ENCODE measurements at regions of chr11 and their contacts with region 1.

Region 1: DNA sequence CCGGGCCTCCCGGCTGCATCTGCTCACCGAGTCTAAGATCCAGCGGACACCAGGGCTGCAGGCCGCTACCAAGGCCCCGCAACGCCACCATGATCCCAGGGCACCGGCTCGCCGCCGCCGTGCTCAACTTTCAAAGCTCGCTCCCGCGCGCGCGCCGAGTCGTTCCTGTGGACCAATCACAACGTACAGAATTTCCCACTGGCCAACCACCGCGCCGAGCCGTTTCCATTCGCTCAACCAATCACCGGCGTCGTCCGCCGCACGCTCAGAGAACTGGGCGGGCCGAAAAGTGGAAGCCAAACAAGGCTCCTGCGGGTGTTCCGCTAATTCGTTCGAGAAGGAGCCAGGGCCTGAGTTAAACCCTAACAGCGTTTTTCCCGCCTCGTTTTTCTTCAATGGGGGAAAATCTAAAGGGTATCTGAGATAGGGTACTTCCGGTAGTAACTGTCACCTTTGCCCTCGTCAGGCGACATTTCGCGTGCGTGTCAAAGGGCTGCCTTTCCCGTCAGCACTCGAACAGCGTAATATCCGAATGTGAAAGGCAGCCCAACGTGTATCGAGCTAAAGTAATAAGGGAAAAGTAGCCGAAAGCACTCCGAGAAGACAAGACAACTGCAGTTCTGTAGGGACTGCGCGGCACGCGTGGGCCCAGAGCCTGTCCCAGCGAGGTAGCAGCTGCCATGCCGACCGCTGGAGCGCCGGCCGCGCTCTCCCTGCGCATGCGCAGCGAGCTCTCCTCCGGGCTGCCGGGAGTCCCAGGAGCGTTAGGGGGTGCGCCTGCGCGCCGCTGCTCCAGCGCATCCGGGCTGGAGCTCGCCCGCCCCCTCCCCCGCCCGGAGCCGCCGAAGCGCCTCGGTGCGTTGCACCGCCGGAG is at the starts of genes NCAPD3 and VPS26B:
- DNase-seq: peak; percentile 92
- ATAC-seq: peak; percentile 91
- H3K4me3 ChIP-seq: peak within 1 kb of the TSS; percentile 75 to 95 (median 92)
- H3K27ac ChIP-seq: peak within 1 kb of the TSS; percentile 93
- H3K4me1 ChIP-seq: peaks cover 43% of the 10 kb centered on the region
- H3K27me3 ChIP-seq: no peaks in the 10 kb centered on the region
- CTCF ChIP-seq: no peak; the same call in 1 of the 2 replicates
- EP300 ChIP-seq: no peak
- POLR2A ChIP-seq: peak; percentile 95 to 98
- RAD21 ChIP-seq: no peak
- total RNA-seq, gene NCAPD3: 25.6 and 33.3 TPM in 2 replicates
- total RNA-seq, gene VPS26B: 20.2 and 20.4 TPM in 2 replicates

Region 2: DNA sequence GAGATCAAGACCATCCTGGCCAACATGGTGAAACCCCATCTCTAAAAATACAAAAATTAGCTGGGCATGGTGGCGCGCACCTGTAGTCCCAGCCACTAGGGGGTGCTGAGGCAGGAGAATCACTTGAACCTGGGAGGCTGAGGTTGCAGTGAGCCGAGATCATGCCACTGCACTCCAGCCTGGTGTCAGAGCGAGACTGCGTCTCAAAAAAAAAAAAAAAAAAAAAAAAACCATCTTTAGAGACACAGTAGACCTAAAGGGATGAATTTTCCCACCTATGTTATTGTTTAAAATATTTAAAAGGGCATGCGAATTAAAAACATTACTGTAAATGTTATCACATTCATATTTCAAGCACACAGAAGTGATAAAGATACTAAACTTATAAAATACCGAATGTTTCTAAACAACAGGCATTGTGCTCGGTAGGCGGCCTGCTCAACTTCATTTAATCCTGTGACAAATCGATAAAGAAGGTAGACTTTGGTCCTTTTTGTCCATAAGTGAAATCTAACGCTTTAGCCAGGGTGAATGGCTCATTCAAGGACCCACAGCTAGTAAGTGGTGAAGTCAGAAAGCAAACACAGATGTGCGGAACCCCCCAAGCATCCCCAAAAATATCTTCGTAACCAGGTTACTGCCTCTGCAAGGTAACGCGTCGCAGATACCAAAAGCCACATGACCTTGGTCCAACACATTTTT is 16.4 kb before region 1 on chr11:
- CTCF ChIA-PET with region 1: no interaction called
- POLR2A ChIA-PET with region 1: interaction called, 17 read pairs
- in situ Hi-C with region 1: no loop called
- intact Hi-C with region 1: loop called (anchors 2 kb)
- DNase-seq: peak; percentile 9
- ATAC-seq: peak; percentile 51
- H3K4me3 ChIP-seq: no peak overlapping the region
- H3K27ac ChIP-seq: no peak overlapping the region
- H3K4me1 ChIP-seq: peaks cover under 1% of the 10 kb centered on the region; the same call in 1 of the 2 replicates
- H3K27me3 ChIP-seq: no peaks in the 10 kb centered on the region
- CTCF ChIP-seq: peak; percentile 77
- EP300 ChIP-seq: no peak
- POLR2A ChIP-seq: no peak
- RAD21 ChIP-seq: peak; percentile 43; the same call in 1 of the 2 replicates

Region 3: GRCh38 chr11:134235399-134235798 is 11.3 kb after region 1 on chr11:
- CTCF ChIA-PET with region 1: no interaction called
- POLR2A ChIA-PET with region 1: interaction called, 24 read pairs
- in situ Hi-C with region 1: no loop called
- intact Hi-C with region 1: no loop called
- DNase-seq: peak; percentile 41
- ATAC-seq: peak; percentile 94
- H3K4me3 ChIP-seq: no peak overlapping the region
- H3K27ac ChIP-seq: peak overlapping the region; percentile 20
- H3K4me1 ChIP-seq: peaks cover 26% of the 10 kb centered on the region
- H3K27me3 ChIP-seq: no peaks in the 10 kb centered on the region
- CTCF ChIP-seq: no peak
- EP300 ChIP-seq: no peak
- POLR2A ChIP-seq: no peak
- RAD21 ChIP-seq: no peak

Region 4: DNA sequence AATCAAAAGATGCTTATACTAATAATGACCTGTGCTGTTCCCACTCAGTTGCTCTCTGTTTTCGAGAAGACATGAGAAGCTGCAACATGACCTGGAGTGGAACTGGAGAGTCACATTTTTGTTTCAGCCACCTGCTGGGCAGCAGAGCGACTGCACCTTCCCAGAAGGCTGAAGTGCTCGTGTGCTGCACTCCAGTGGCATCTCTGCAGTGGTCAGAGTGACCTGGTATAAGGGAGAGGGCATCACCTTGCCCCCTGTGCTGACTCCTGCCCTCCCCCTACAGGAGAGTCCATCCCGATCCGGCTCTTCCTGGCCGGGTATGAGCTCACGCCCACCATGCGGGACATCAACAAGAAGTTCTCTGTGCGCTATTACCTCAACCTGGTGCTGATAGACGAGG is 20.6 kb after region 1 on chr11:
- CTCF ChIA-PET with region 1: no interaction called
- POLR2A ChIA-PET with region 1: interaction called, 4 read pairs
- in situ Hi-C with region 1: no loop called
- intact Hi-C with region 1: loop called (anchors 1 kb)
- DNase-seq: peak; percentile 35
- ATAC-seq: peak; percentile 93
- H3K4me3 ChIP-seq: no peak overlapping the region
- H3K27ac ChIP-seq: no peak overlapping the region
- H3K4me1 ChIP-seq: no peaks in the 10 kb centered on the region
- H3K27me3 ChIP-seq: no peaks in the 10 kb centered on the region
- CTCF ChIP-seq: peak; percentile 49
- EP300 ChIP-seq: no peak
- POLR2A ChIP-seq: no peak
- RAD21 ChIP-seq: peak; percentile 76

Region 5: GRCh38 chr11:134253188-134253993 is 29.3 kb after region 1 on chr11 and contains the starts of genes ACAD8 and THYN1:
- CTCF ChIA-PET with region 1: no interaction called
- POLR2A ChIA-PET with region 1: interaction called, 12 read pairs
- in situ Hi-C with region 1: no loop called
- intact Hi-C with region 1: loop called (anchors 2 kb)
- DNase-seq: peak; percentile 93
- ATAC-seq: peak; percentile 99
- H3K4me3 ChIP-seq: peak within 1 kb of the TSS; percentile 75 to 98 (median 86)
- H3K27ac ChIP-seq: peak within 1 kb of the TSS; percentile 61
- H3K4me1 ChIP-seq: peaks cover 24% of the 10 kb centered on the region
- H3K27me3 ChIP-seq: no peaks in the 10 kb centered on the region
- CTCF ChIP-seq: peak; percentile 38; the same call in 1 of the 2 replicates
- EP300 ChIP-seq: no peak
- POLR2A ChIP-seq: peak; percentile 65 to 92; a peak in 3 of 4 replicates
- RAD21 ChIP-seq: no peak; the same call in 1 of the 2 replicates
- total RNA-seq, gene ACAD8: 16.1 and 20.3 TPM in 2 replicates
- total RNA-seq, gene THYN1: 87.6 and 124 TPM in 2 replicates

Measured in HepG2 (cell line).